Ovary (tissue), 10 donors: ENCODE measurements at regions of chr1 and their contacts with region 1.

Region 1: DNA sequence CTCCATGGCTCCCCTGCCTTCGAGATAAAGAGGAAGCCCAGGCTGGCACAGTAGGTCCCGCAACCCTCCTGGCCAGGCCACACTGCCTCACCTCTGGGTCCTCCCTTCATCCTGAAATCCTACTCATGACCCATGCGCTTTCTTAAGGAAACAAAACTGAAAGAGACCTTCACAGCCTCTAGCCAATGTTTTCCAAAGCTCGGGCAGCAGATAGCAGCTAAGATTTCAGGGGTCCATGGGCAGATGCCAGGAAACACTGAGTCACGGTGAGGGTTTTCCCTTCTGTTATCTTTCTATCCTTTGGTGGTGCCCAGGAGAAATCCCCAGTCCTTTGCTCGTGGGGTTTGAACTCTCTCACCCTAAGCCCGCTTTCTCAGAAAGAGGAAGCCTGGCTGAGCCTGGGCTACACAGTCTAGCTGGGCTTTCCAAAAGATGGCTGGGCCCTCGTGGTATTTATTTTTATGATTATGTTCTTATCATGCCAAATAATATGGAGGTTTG is 26.6 kb downstream of the TTC39A start:
- DNase-seq: peak in 2 of 5 donors; percentile 48 to 50
- H3K4me3 ChIP-seq: no peak overlapping the region
- H3K27ac ChIP-seq: peak overlapping the region in 1 of 2 donors; percentile 46
- H3K4me1 ChIP-seq: no peaks in the 10 kb centered on the region
- H3K27me3 ChIP-seq: no peaks in the 10 kb centered on the region
- CTCF ChIP-seq: no peak
- EP300 ChIP-seq: no peak
- POLR2A ChIP-seq: no peak

Region 2: GRCh38 chr1:51535006-51535592 is 231.3 kb after region 1 on chr1:
- intact Hi-C with region 1: loop called in 1 of 4 experiments (anchors 10 kb)
- DNase-seq: peak; percentile 47 to 78 (median 60)
- H3K4me3 ChIP-seq: no peak overlapping the region
- H3K27ac ChIP-seq: peak overlapping the region in 1 of 2 donors; percentile 54
- H3K4me1 ChIP-seq: peaks cover 3% of the 10 kb centered on the region
- H3K27me3 ChIP-seq: no peaks in the 10 kb centered on the region
- CTCF ChIP-seq: peak; percentile 69 to 81 (median 79)
- EP300 ChIP-seq: no peak
- POLR2A ChIP-seq: no peak